ENCODE measurements at regions of chr14 and their contacts with region 1.

Region 1: DNA sequence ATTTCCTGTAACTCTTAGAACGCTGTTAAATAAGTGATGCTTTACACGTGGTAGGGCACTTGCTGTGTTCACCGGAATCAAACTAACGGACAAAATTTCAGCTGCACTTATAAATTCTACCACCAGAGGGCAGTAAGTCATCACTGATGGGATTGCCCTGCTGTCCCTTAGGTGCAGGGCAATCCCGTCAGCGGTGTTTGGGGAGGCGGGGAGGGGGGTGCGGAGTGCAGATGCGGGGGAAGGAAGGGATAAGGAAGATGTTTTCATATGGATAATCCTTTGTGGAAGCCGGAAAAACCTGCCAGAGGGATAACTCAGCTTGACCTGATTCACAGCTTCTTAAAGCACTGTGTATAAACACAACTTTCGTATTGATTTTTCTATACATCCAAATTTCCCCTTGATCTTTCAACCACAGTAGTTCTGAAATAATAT is 21.7 kb upstream of the SLC10A1 start:
- DNase-seq: peak; percentile 67 to 71
- ATAC-seq: peak; percentile 82 to 96
- H3K4me3 ChIP-seq: no peak overlapping the region
- H3K27ac ChIP-seq: peak overlapping the region; percentile 65 to 69
- H3K4me1 ChIP-seq: no peaks in the 10 kb centered on the region; the same call in 1 of the 3 replicates
- CTCF ChIP-seq: peak; percentile 96
- EP300 ChIP-seq: no peak
- POLR2A ChIP-seq: no peak
- RAD21 ChIP-seq: peak; percentile 95 to 99

Region 2: DNA sequence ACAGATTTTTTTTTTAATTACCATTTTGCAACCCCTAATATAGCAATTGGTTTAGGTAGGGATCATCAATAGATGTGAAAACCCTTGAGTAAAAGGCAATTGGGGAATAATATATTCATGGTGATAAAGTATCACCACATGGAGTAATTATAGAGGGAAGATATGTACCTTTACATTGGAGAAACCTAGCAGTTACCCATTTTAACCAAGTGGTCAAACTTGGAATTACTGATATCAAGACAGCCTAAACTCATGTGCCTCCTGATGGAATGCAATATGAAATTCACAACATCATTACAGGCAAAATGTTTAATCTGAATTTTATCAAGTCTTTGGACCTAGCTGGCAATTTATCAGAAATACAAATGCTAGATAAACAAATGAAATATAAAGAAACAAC is 15.0 kb before region 1 on chr14:
- CTCF ChIA-PET with region 1: interaction called, 21 read pairs
- POLR2A ChIA-PET with region 1: no interaction called
- DNase-seq: peak; percentile 17 to 44
- ATAC-seq: peak; percentile 81 to 82; a peak in 5 of 6 replicates
- H3K4me3 ChIP-seq: no peak overlapping the region
- H3K27ac ChIP-seq: no peak overlapping the region
- H3K4me1 ChIP-seq: 0 out of 3 replicates have a peak, but pooled peaks cover 5% of the 10 kb centered on the region
- CTCF ChIP-seq: no peak
- EP300 ChIP-seq: no peak
- POLR2A ChIP-seq: no peak
- RAD21 ChIP-seq: no peak

Region 3: GRCh38 chr14:70018713-70019211 is 200.0 kb after region 1 on chr14:
- CTCF ChIA-PET with region 1: interaction called, 36 read pairs
- POLR2A ChIA-PET with region 1: no interaction called
- DNase-seq: no peak
- ATAC-seq: no peak
- H3K4me3 ChIP-seq: no peak overlapping the region
- H3K27ac ChIP-seq: peak overlapping the region; percentile 0 to 59; a peak in 3 of 6 replicates
- H3K4me1 ChIP-seq: no peaks in the 10 kb centered on the region
- CTCF ChIP-seq: no peak
- EP300 ChIP-seq: no peak
- POLR2A ChIP-seq: no peak
- RAD21 ChIP-seq: no peak

Region 4: DNA sequence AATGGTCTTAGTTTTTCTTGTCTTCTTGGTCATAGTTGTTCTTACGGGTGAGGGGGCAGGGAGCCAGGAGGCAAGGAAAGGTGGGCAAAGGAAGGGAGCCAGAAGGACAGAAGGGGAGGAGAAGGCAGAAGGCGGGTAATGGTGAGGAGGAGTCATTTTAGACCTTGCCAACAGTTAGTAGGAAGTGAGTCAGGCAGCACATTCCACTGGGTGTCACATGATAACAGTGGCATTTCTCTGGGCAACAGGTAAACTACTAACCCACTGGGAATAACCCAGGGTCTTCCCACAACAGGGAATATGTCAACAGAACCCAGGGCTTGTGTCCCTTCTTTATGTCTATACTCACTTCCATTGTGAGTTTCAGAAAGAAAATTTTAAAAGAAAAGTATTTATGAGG is 242.3 kb after region 1 on chr14:
- CTCF ChIA-PET with region 1: interaction called, 12 read pairs
- POLR2A ChIA-PET with region 1: no interaction called
- DNase-seq: no peak
- ATAC-seq: no peak
- H3K4me3 ChIP-seq: no peak overlapping the region
- H3K27ac ChIP-seq: peak overlapping the region in 1 of 2 experiments; percentile 3; a peak in 1 of 6 replicates
- H3K4me1 ChIP-seq: peaks cover 16% of the 10 kb centered on the region
- CTCF ChIP-seq: no peak
- EP300 ChIP-seq: no peak
- POLR2A ChIP-seq: no peak
- RAD21 ChIP-seq: no peak

Region 5: GRCh38 chr14:70080074-70080473 is 261.3 kb after region 1 on chr14:
- CTCF ChIA-PET with region 1: interaction called, 85 read pairs
- POLR2A ChIA-PET with region 1: no interaction called
- DNase-seq: no peak
- ATAC-seq: no peak
- H3K4me3 ChIP-seq: no peak overlapping the region
- H3K27ac ChIP-seq: no peak overlapping the region
- H3K4me1 ChIP-seq: no peaks in the 10 kb centered on the region
- CTCF ChIP-seq: no peak
- EP300 ChIP-seq: no peak
- POLR2A ChIP-seq: no peak
- RAD21 ChIP-seq: no peak

Region 6: GRCh38 chr14:70239802-70240201 is 421.0 kb after region 1 on chr14:
- CTCF ChIA-PET with region 1: no interaction called
- POLR2A ChIA-PET with region 1: no interaction called
- DNase-seq: no peak
- ATAC-seq: no peak
- H3K4me3 ChIP-seq: no peak overlapping the region
- H3K27ac ChIP-seq: no peak overlapping the region
- H3K4me1 ChIP-seq: no peaks in the 10 kb centered on the region
- CTCF ChIP-seq: no peak
- EP300 ChIP-seq: no peak
- POLR2A ChIP-seq: no peak
- RAD21 ChIP-seq: no peak

Measured in A549 (cell line).